ENCODE measurements at regions of chr6 and their contacts with region 1.

Region 1: GRCh38 chr6:3512832-3513231 is 56.0 kb upstream of the SLC22A23 start:
- DNase-seq: no peak
- H3K4me3 Mint-ChIP-seq: no peak overlapping the region
- H3K27ac Mint-ChIP-seq: no peak overlapping the region
- H3K4me1 Mint-ChIP-seq: no peaks in the 10 kb centered on the region
- H3K27me3 Mint-ChIP-seq: peaks cover 3% of the 10 kb centered on the region

Region 2: DNA sequence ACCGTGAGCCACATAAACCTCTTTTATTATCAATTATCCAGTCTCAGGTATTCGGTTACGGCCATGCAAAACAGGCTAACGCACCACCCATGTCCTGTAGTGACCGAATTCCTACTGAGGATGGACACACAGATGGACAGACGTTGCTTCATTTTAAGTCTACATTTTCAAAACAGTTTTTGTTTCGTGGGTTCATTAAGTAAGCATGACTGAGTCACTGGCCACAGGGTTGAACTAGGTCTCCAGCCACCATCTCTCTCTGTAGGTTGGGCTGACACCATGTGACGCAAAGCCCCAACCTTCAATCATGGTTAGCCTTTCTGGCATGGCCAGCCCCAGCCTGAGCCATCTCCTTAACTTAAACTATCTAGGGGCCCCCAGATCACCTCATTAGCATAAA is 54.0 kb after region 1 on chr6:
- intact Hi-C with region 1: loop called (anchors 2 kb)
- DNase-seq: no peak
- H3K4me3 Mint-ChIP-seq: no peak overlapping the region
- H3K27ac Mint-ChIP-seq: no peak overlapping the region
- H3K4me1 Mint-ChIP-seq: no peaks in the 10 kb centered on the region
- H3K27me3 Mint-ChIP-seq: peaks cover 2% of the 10 kb centered on the region

Measured in activated T-helper 2 cell treated with anti-CD3 and anti-CD28 coated beads, Interferon-gamma antibody, Interleukin-2, Interleukin-4, amounts not matched to agents 10 μg/mL and 5 μg/mL and 100 μg/mL, durations not matched to agents 14 hours and 24 hours and 36 hours (primary cell).